ENCODE measurements at regions of chr6 and their contacts with region 1.

Region 1: DNA sequence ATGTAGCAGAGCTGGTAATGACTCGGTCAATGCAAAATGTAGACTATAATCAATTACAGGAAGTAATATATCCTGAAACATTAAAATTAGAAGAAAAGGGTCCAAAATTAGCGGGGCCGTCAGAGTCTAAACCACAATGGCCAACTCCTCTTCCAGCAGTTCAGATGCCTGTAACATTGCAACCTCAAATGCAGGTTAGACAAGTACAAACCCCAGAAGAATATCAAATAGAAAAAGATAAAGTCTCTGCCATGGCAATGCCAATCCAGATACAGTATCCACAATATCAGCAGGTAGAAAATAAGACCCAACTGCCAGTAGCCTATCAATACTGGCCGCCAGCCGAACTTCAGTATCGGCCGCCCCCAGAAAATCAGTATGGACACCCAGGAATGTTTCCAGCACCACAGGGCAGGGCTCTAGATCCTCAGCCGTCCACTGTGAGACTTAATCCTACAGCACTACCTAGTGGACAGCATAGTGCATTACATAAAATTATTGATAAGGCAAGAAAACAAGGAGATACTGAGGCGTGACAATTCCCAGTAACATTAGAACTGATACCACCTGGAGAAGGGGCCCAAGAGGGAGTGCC is 158.4 kb downstream of the GPX5 start:
- DNase-seq: peak; percentile 55
- H3K4me3 ChIP-seq: no peak overlapping the region
- H3K27ac ChIP-seq: no peak overlapping the region
- H3K4me1 ChIP-seq: peaks cover 7% of the 10 kb centered on the region
- H3K27me3 ChIP-seq: peaks cover 20 to 25% of the 10 kb centered on the region in 2 experiments
- CTCF ChIP-seq: peak; percentile 43 to 48
- POLR2A ChIP-seq: no peak

Region 2: GRCh38 chr6:27902335-27903314 is 781.4 kb before region 1 on chr6:
- CTCF ChIA-PET with region 1: no interaction called
- POLR2A ChIA-PET with region 1: no interaction called
- dilution Hi-C with region 1: no loop called
- intact Hi-C with region 1: loop called (anchors 5 kb)
- DNase-seq: peak; percentile 92
- H3K4me3 ChIP-seq: peak overlapping the region; percentile 39 to 91 (median 86)
- H3K27ac ChIP-seq: peak overlapping the region; percentile 37
- H3K4me1 ChIP-seq: no peaks in the 10 kb centered on the region
- H3K27me3 ChIP-seq: peaks cover 0 to 11% of the 10 kb centered on the region in 2 experiments
- CTCF ChIP-seq: no peak
- POLR2A ChIP-seq: no peak

Region 3: GRCh38 chr6:28161410-28162079 is 522.5 kb before region 1 on chr6:
- CTCF ChIA-PET with region 1: no interaction called
- POLR2A ChIA-PET with region 1: no interaction called
- dilution Hi-C with region 1: no loop called
- intact Hi-C with region 1: no loop called
- DNase-seq: peak; percentile 16
- H3K4me3 ChIP-seq: peak overlapping the region; percentile 13 to 52 (median 26)
- H3K27ac ChIP-seq: no peak overlapping the region
- H3K4me1 ChIP-seq: peaks cover 6% of the 10 kb centered on the region
- H3K27me3 ChIP-seq: peaks cover 0 to under 1% of the 10 kb centered on the region in 2 experiments
- CTCF ChIP-seq: no peak
- POLR2A ChIP-seq: peak; percentile 50

Region 4: GRCh38 chr6:28393911-28394662 is 290.0 kb before region 1 on chr6:
- CTCF ChIA-PET with region 1: no interaction called
- POLR2A ChIA-PET with region 1: no interaction called
- dilution Hi-C with region 1: no loop called
- intact Hi-C with region 1: loop called (anchors 1 kb)
- DNase-seq: peak; percentile 15
- H3K4me3 ChIP-seq: no peak overlapping the region
- H3K27ac ChIP-seq: no peak overlapping the region
- H3K4me1 ChIP-seq: peaks cover 8% of the 10 kb centered on the region
- H3K27me3 ChIP-seq: no peaks in the 10 kb centered on the region
- CTCF ChIP-seq: peak in 1 of 2 donors; percentile 8
- POLR2A ChIP-seq: no peak

Region 5: GRCh38 chr6:28648035-28648877 is 35.8 kb before region 1 on chr6:
- CTCF ChIA-PET with region 1: interaction called, 5 read pairs
- POLR2A ChIA-PET with region 1: no interaction called
- dilution Hi-C with region 1: no loop called
- intact Hi-C with region 1: loop called (anchors 2 kb)
- DNase-seq: peak; percentile 86
- H3K4me3 ChIP-seq: peak overlapping the region; percentile 47 to 97 (median 70)
- H3K27ac ChIP-seq: peak overlapping the region; percentile 14
- H3K4me1 ChIP-seq: peaks cover 3% of the 10 kb centered on the region
- H3K27me3 ChIP-seq: peaks cover 7 to 20% of the 10 kb centered on the region in 2 experiments
- CTCF ChIP-seq: no peak
- POLR2A ChIP-seq: no peak

Region 6: DNA sequence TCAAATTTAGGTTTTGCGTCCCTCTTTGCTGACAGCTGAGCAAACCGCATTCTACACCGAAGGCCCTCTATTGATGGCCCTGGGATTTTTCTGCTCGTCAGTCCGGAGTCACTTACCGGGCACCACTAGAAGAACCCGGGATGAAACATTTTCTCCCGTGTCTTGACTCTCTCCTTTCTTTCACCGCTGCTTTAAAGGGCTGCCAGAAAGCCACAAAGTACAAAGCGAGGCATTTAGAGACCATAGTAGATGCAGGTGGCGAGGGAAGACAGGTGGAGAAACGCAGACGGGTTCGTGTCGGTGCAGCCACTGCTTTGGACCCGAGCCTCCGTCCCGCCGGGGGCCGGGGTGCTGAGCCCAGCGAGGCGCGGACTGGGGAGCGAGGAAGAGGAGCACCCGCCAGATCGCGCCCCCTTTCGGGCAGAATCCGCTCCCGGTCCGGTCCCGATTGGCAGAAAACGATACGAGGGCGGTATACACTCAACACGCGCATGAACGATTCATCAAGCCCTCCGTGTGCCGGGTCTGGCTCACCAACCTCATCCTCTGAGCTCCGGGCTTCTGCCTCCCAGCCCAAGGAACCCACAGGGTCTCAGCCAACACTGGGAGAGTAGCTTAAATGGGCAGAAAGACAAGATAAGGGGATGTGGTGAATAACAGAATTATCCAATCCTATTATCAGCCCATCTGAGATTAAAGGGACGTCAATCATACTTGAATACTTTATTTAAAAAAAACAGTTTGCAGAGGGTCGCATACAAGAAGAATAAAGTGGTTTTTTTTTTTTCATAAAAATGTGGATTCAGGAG is 154.8 kb after region 1 on chr6:
- CTCF ChIA-PET with region 1: interaction called, 7 read pairs
- POLR2A ChIA-PET with region 1: no interaction called
- dilution Hi-C with region 1: no loop called
- intact Hi-C with region 1: loop called (anchors 1 kb)
- DNase-seq: peak; percentile 88
- H3K4me3 ChIP-seq: peak overlapping the region; percentile 88 to 97 (median 95)
- H3K27ac ChIP-seq: peak overlapping the region; percentile 21
- H3K4me1 ChIP-seq: peaks cover 6% of the 10 kb centered on the region
- H3K27me3 ChIP-seq: peaks cover 1 to 13% of the 10 kb centered on the region in 2 experiments
- CTCF ChIP-seq: peak; percentile 77 to 87
- POLR2A ChIP-seq: no peak

Region 7: GRCh38 chr6:28988536-28989311 is 304.7 kb after region 1 on chr6:
- CTCF ChIA-PET with region 1: interaction called, 3 read pairs
- POLR2A ChIA-PET with region 1: no interaction called
- dilution Hi-C with region 1: no loop called
- intact Hi-C with region 1: loop called (anchors 1 kb)
- DNase-seq: peak; percentile 66
- H3K4me3 ChIP-seq: peak overlapping the region in 2 of 3 experiments; percentile 4 to 34
- H3K27ac ChIP-seq: no peak overlapping the region
- H3K4me1 ChIP-seq: no peaks in the 10 kb centered on the region
- H3K27me3 ChIP-seq: no peaks in the 10 kb centered on the region
- CTCF ChIP-seq: peak; percentile 73 to 79
- POLR2A ChIP-seq: no peak